ENCODE measurements at regions of chr4 and their contacts with region 1.

Region 1: DNA sequence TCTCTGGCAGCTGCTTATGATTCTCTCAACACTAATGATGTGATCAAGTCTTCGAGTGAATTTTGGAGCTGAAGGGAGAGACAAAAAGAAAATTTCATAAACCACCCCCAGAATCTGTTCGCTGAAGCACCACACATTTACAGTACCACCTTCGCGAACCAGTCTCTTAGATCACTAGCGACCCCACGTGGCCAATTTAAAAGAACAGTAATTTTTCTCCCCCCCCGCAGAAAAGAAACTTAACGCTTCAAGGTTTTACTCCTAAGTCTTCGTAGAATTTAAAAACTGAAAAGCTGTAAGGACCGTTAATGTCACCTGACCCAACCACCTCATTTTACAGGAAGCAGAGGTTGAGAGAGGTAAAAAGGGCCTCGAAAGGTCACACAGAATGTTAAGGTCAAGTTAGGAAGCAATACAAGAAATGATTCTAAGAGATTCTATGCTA is 187.5 kb downstream of the QDPR start:
- DNase-seq: peak; percentile 12
- ATAC-seq: peak; percentile 48; the same call in 2 of the 3 replicates
- H3K4me3 ChIP-seq: no peak overlapping the region
- H3K27ac ChIP-seq: no peak overlapping the region
- H3K4me1 ChIP-seq: no peaks in the 10 kb centered on the region
- H3K27me3 ChIP-seq: peaks cover 0 to 7% of the 10 kb centered on the region in 2 experiments; a peak in 1 of 5 replicates
- CTCF ChIP-seq: peak; percentile 60
- EP300 ChIP-seq: no peak
- POLR2A ChIP-seq: no peak
- RAD21 ChIP-seq: peak; percentile 31; the same call in 1 of the 2 replicates

Region 2: DNA sequence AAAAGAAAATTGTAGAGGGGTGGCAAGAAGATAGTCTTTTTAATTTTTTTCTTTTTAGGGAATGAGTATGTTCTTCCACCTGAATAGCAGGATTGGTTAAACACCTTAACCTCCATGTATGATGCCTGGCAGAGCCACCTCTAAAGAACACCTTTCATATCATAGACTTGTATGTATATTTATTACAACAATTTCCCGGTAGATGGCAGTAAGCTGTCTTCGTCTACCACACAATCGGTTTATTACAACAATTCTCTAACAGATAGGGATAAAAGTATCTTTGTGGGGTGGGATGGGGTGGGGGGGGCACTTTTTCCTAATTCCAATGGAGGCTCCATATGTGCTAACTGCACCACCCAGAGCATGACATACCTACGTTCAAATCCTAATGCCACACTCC is 681.5 kb before region 1 on chr4:
- CTCF ChIA-PET with region 1: no interaction called
- POLR2A ChIA-PET with region 1: no interaction called
- in situ Hi-C with region 1: loop called (anchors 5 kb)
- intact Hi-C with region 1: no loop called
- DNase-seq: peak; percentile 7
- ATAC-seq: peak; percentile 53; the same call in 1 of the 3 replicates
- H3K4me3 ChIP-seq: no peak overlapping the region
- H3K27ac ChIP-seq: no peak overlapping the region
- H3K4me1 ChIP-seq: no peaks in the 10 kb centered on the region
- H3K27me3 ChIP-seq: no peaks in the 10 kb centered on the region
- CTCF ChIP-seq: peak; percentile 52
- EP300 ChIP-seq: no peak
- POLR2A ChIP-seq: no peak
- RAD21 ChIP-seq: no peak

Region 3: DNA sequence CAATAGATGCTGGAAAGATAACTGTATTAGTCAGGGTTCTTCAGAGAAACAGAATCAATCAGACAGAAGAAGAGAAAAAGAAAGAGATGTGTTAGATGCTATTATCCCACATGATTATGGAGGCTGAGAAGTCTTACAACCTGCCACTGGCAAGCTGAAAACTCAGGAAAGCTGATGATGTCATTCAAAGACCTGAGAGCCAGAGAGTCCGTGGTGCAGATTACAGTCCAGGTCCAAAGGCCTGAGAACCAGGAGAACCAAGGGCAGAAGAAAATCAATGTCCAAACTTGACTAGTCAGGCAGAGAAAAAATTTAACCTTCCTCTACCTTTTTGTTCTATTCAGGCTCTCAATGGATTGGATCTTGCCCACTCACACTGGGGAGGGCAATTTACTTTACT is 15.0 kb after region 1 on chr4:
- CTCF ChIA-PET with region 1: no interaction called
- POLR2A ChIA-PET with region 1: no interaction called
- in situ Hi-C with region 1: no loop called
- intact Hi-C with region 1: no loop called
- DNase-seq: no peak
- ATAC-seq: no peak
- H3K4me3 ChIP-seq: no peak overlapping the region
- H3K27ac ChIP-seq: no peak overlapping the region
- H3K4me1 ChIP-seq: no peaks in the 10 kb centered on the region
- H3K27me3 ChIP-seq: peaks cover 0 to 18% of the 10 kb centered on the region in 2 experiments; a peak in 2 of 5 replicates
- CTCF ChIP-seq: no peak
- EP300 ChIP-seq: no peak
- POLR2A ChIP-seq: no peak
- RAD21 ChIP-seq: no peak

Region 4: DNA sequence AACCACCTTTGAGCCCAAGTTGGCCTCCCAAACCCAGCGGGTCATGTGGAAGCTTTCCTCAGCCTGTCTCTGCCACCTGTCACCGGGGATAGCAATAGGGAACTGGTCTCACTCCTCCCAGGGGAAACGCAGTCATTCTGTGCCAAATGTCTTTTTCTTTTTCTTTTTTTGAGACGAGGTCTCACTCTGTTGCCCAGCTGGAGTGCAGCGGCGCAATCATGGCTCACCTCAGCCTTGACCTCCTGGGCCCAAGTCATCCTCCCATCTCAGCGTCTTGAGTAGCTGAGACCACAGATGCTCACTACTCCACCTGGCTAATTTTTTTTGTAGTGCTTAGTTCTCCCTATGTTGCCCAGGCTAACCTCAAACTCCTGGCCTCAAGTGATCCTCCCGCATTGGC is 330.3 kb after region 1 on chr4:
- CTCF ChIA-PET with region 1: no interaction called
- POLR2A ChIA-PET with region 1: no interaction called
- in situ Hi-C with region 1: no loop called
- intact Hi-C with region 1: no loop called
- DNase-seq: no peak
- ATAC-seq: no peak
- H3K4me3 ChIP-seq: no peak overlapping the region
- H3K27ac ChIP-seq: no peak overlapping the region
- H3K4me1 ChIP-seq: no peaks in the 10 kb centered on the region
- H3K27me3 ChIP-seq: peaks cover 3 to 31% of the 10 kb centered on the region in 2 experiments; a peak in 3 of 5 replicates
- CTCF ChIP-seq: no peak
- EP300 ChIP-seq: no peak
- POLR2A ChIP-seq: no peak
- RAD21 ChIP-seq: no peak